Mammary epithelial cell (primary cell): ENCODE measurements at regions of chr11 and their contacts with region 1.

Region 1: GRCh38 chr11:20783220-20783619 is 113.8 kb downstream of the NELL1 start:
- DNase-seq: no peak
- H3K4me3 ChIP-seq: no peak overlapping the region
- H3K27ac ChIP-seq: no peak overlapping the region
- H3K4me1 ChIP-seq: no peaks in the 10 kb centered on the region
- H3K27me3 ChIP-seq: no peaks in the 10 kb centered on the region
- CTCF ChIP-seq: no peak

Region 2: GRCh38 chr11:20762116-20762844 is 20.9 kb before region 1 on chr11:
- CTCF ChIA-PET with region 1: no interaction called
- dilution Hi-C with region 1: no loop called
- in situ Hi-C with region 1: no loop called
- intact Hi-C with region 1: no loop called
- DNase-seq: no peak
- H3K4me3 ChIP-seq: no peak overlapping the region
- H3K27ac ChIP-seq: no peak overlapping the region
- H3K4me1 ChIP-seq: no peaks in the 10 kb centered on the region
- H3K27me3 ChIP-seq: no peaks in the 10 kb centered on the region
- CTCF ChIP-seq: no peak

Region 3: GRCh38 chr11:20839231-20839630 is 56.0 kb after region 1 on chr11:
- CTCF ChIA-PET with region 1: no interaction called
- dilution Hi-C with region 1: loop called (anchors 5 kb)
- in situ Hi-C with region 1: no loop called
- intact Hi-C with region 1: no loop called
- DNase-seq: no peak
- H3K4me3 ChIP-seq: no peak overlapping the region
- H3K27ac ChIP-seq: no peak overlapping the region
- H3K4me1 ChIP-seq: no peaks in the 10 kb centered on the region
- H3K27me3 ChIP-seq: no peaks in the 10 kb centered on the region
- CTCF ChIP-seq: no peak